Caco-2 (cell line): ENCODE measurements at regions of chr17 and their contacts with region 1.

Region 1: DNA sequence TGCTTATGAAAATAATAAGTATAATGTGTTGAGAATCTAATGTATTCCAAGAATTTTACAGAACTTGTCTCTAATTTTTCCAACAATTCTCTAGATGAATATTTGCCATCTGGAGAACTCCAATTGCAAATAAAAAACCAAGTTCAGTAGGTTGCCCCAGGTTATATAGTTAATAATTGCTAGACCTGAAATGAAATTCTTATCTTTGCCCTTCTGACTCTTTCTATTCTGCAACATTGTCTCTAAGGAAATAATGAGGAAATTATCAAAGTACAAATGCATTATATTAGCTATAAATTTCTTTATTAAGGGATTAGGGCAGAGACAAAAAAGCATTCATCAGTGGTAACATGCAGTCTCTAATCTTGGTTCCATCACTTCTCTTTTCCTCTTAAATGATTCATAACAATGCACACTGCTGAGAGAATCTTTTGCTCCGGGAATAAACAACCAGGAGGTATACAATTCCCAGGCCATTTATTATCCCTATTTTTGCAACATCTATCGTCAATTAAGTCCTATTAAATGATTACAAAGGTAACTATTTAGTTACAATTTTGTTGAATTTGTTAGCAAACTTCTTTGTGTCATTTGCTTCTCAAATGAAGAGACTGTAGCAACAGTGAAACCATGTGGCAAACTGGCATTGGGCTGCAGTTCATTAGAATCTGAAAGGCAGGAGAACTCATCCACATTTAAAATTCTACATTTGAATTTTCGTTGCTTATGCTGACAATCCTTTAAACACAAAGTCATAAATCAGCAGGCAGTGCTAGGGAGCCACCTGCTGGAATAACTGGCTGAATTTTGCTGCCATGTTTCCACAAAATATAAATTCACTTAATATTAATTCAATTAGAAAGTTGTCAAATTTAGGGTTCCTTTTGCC is 349.6 kb downstream of the KIF2B start:
- DNase-seq: peak; percentile 29 to 34
- H3K4me3 ChIP-seq: no peak overlapping the region
- H3K4me3 Mint-ChIP-seq: no peak overlapping the region
- H3K27ac Mint-ChIP-seq: no peak overlapping the region
- H3K4me1 ChIP-seq: peaks cover 6% of the 10 kb centered on the region; the same call in 1 of the 2 replicates
- H3K4me1 Mint-ChIP-seq: no peaks in the 10 kb centered on the region
- H3K27me3 ChIP-seq: no peaks in the 10 kb centered on the region
- H3K27me3 Mint-ChIP-seq: no peaks in the 10 kb centered on the region
- CTCF ChIP-seq: peak; percentile 58 to 73

Region 2: GRCh38 chr17:52383493-52384100 is 1788.7 kb before region 1 on chr17:
- CTCF ChIA-PET with region 1: no interaction called
- POLR2A ChIA-PET with region 1: no interaction called
- intact Hi-C with region 1: loop called (anchors 10 kb)
- DNase-seq: peak; percentile 70 to 76
- H3K4me3 ChIP-seq: no peak overlapping the region
- H3K4me3 Mint-ChIP-seq: no peak overlapping the region
- H3K27ac Mint-ChIP-seq: no peak overlapping the region
- H3K4me1 ChIP-seq: no peaks in the 10 kb centered on the region
- H3K4me1 Mint-ChIP-seq: no peaks in the 10 kb centered on the region
- H3K27me3 ChIP-seq: no peaks in the 10 kb centered on the region
- H3K27me3 Mint-ChIP-seq: no peaks in the 10 kb centered on the region
- CTCF ChIP-seq: peak; percentile 70 to 82

Region 3: DNA sequence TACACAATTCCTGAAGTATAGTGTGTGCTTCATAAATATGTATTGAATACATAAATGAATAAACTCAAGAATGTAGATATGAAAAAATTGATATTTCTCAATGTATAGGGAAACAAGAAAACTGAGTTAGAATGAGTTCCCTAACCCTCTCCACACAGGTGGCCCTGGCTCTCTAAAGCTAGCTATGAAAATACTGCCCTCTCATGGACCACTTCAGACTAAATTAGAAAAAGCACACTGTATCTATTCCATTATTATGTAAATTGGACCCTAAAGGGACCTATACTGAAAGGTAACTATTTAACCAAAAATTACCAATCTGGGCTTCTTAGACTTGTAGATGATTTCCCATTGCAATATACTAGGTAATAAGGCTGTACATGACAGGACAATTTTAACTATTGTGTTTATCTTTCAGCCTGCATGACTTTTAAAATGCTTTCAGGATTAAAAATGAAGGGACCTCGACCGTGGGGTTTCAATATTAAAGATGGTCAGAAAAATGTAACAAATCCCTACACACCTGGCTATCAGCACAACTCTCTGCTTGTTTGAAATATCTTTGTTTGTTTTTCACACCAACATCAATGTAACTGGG is 1022.1 kb before region 1 on chr17:
- CTCF ChIA-PET with region 1: no interaction called
- POLR2A ChIA-PET with region 1: no interaction called
- intact Hi-C with region 1: loop called (anchors 1 kb)
- DNase-seq: peak in 1 of 2 experiments; percentile 36
- H3K4me3 ChIP-seq: no peak overlapping the region
- H3K4me3 Mint-ChIP-seq: no peak overlapping the region
- H3K27ac Mint-ChIP-seq: no peak overlapping the region
- H3K4me1 ChIP-seq: no peaks in the 10 kb centered on the region
- H3K4me1 Mint-ChIP-seq: peaks cover 10% of the 10 kb centered on the region
- H3K27me3 ChIP-seq: no peaks in the 10 kb centered on the region
- H3K27me3 Mint-ChIP-seq: peaks cover 2% of the 10 kb centered on the region
- CTCF ChIP-seq: peak; percentile 46 to 49

Region 4: DNA sequence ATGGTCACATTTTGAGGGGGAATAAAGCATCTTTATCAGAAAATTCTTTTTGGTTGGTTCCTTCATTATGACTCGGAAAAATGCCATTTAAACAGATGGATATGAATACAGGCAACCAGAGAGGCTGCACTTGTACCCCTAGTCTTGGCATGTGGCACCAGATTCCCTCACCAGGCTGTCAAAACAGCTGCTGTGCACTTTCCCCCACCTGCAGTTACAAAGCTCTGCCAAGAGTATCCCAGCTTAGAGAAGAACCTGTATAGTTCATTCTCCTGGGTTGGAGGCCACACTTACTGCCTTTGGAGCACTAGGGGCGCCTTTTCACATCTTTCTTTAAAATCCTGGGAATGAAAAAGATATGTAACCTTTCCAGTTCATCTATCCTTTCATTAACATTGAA is 159.3 kb before region 1 on chr17:
- CTCF ChIA-PET with region 1: no interaction called
- POLR2A ChIA-PET with region 1: no interaction called
- intact Hi-C with region 1: loop called (anchors 10 kb)
- DNase-seq: no peak
- H3K4me3 ChIP-seq: no peak overlapping the region
- H3K4me3 Mint-ChIP-seq: no peak overlapping the region
- H3K27ac Mint-ChIP-seq: no peak overlapping the region
- H3K4me1 ChIP-seq: no peaks in the 10 kb centered on the region
- H3K4me1 Mint-ChIP-seq: no peaks in the 10 kb centered on the region
- H3K27me3 ChIP-seq: no peaks in the 10 kb centered on the region
- H3K27me3 Mint-ChIP-seq: peaks cover 6% of the 10 kb centered on the region
- CTCF ChIP-seq: no peak

Region 5: DNA sequence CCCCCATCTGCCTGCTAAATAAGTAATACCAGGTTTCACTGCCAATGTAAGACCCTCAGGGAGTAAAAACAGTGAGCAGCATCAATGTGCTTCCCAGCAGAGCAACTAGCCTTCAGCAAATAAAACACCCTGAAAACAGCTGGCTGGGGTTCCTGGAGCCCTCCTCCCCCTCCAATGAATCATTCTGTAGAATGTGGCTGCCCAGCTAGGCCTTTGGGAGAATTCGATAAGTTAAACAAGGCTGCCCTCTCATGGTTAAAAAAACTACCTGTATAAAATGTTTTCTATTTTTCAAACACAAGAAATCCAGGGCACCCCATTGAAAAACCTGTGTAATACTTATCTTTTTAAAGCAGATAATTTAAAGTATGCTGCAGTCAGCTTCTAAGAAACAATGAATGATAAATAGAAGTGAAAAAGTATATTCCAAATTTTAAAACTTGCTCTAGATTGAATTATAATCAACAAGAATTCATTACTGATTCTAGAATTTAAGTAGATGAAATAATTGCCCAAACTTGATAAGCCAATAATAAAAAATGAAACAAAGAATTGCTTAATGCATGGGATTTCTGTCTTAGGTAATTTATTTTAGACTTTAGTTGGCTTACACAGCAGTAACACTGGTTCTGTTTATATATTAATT is 719.0 kb after region 1 on chr17:
- CTCF ChIA-PET with region 1: no interaction called
- POLR2A ChIA-PET with region 1: no interaction called
- intact Hi-C with region 1: loop called (anchors 2 kb)
- DNase-seq: peak in 1 of 2 experiments; percentile 61
- H3K4me3 ChIP-seq: no peak overlapping the region
- H3K4me3 Mint-ChIP-seq: no peak overlapping the region
- H3K27ac Mint-ChIP-seq: no peak overlapping the region
- H3K4me1 ChIP-seq: no peaks in the 10 kb centered on the region
- H3K4me1 Mint-ChIP-seq: no peaks in the 10 kb centered on the region
- H3K27me3 ChIP-seq: no peaks in the 10 kb centered on the region
- H3K27me3 Mint-ChIP-seq: peaks cover 6% of the 10 kb centered on the region
- CTCF ChIP-seq: peak; percentile 39 to 64